ENCODE measurements at regions of chr5 and their contacts with region 1.

Region 1: DNA sequence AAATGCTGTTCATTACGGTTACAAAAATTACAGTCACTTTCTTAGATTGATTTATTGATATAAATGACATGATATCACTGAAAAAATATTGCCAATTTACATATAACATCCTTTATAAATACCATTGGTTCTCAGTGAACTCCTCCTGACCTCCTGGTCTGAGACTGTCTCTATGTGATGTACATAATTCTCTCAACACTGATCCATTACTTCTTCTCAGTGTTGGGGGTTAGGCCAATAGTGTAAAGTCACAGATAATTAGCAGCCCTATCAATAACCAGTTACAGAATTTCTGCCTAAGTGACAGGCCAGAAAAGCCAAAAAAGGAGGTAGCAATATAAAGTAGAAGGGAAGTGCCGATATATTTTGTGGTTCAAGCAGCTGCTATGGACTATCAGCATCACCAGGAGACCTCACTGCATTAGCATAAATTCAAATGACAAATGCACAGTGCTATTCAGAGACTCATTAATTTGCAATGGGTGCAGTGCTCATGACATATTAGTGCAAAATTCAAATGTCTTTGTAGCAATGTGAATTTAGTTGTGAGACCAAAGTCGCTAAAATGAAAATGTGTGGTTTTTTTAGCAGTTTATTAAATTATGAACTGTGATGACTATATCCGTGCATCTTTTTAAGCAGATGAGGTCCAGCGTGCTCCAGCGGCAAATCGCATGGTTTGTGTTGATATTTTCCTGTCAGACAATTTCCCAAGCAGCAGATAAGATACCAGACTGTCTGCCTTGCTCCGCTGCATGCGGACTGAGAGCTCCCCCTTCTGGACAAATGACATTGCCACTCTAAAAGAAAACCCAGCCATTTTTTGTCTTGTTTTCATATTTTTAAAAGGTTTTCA is 144.6 kb downstream of the CETN3 start:
- DNase-seq: peak; percentile 5 to 63
- ATAC-seq: peak; percentile 81 to 85
- H3K4me3 ChIP-seq: no peak overlapping the region
- H3K27ac ChIP-seq: no peak overlapping the region
- H3K4me1 ChIP-seq: no peaks in the 10 kb centered on the region
- CTCF ChIP-seq: peak; percentile 94
- EP300 ChIP-seq: no peak
- POLR2A ChIP-seq: no peak
- RAD21 ChIP-seq: peak; percentile 91 to 95

Region 2: GRCh38 chr5:88729084-88729828 is 1535.7 kb before region 1 on chr5:
- CTCF ChIA-PET with region 1: interaction called, 92 read pairs
- POLR2A ChIA-PET with region 1: no interaction called
- DNase-seq: peak; percentile 13 to 75
- ATAC-seq: peak; percentile 92 to 97
- H3K4me3 ChIP-seq: no peak overlapping the region
- H3K27ac ChIP-seq: no peak overlapping the region
- H3K4me1 ChIP-seq: no peaks in the 10 kb centered on the region
- CTCF ChIP-seq: peak; percentile 87
- EP300 ChIP-seq: no peak
- POLR2A ChIP-seq: no peak
- RAD21 ChIP-seq: peak; percentile 85 to 89

Region 3: DNA sequence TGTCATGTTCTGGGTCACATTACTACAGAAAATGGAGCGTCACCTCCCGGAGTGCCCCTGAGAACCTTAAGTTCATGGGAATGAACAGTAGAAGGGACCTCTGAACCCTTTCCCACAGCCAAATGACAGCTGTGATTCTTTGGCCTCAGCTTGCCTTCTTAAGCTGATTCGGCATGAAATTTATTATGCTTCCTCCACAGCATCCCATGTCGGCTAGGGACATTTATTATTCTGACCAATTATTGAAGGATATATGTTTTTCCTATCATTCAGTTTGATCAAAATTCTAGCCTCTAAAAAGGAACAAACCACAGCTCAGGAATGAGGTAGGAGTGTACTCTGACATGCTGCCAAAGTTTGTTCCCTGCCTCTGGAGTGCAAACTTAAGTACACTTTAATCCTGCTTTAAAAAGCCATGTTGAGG is 295.9 kb before region 1 on chr5:
- CTCF ChIA-PET with region 1: no interaction called
- POLR2A ChIA-PET with region 1: no interaction called
- DNase-seq: no peak
- ATAC-seq: no peak
- H3K4me3 ChIP-seq: no peak overlapping the region
- H3K27ac ChIP-seq: no peak overlapping the region
- H3K4me1 ChIP-seq: no peaks in the 10 kb centered on the region
- CTCF ChIP-seq: no peak
- EP300 ChIP-seq: no peak
- POLR2A ChIP-seq: no peak
- RAD21 ChIP-seq: no peak

Region 4: DNA sequence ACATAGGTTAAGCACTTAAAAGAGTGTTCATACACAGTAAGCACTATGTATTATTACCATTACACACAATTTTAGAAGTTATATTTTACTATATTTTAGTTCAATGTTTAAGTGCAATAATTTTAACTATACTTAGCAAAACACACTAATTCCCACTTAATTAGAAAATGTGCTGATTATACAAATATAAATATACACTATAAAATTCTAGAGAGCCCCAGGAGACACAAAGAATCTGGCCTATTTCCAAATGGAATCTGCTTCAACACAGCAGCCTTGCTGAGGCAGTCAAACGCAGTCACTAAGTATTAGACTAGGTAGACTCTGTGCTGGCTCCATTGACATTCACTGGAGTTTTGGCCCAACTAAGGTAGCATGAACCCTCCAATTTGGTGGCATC is 16.3 kb before region 1 on chr5:
- CTCF ChIA-PET with region 1: interaction called, 14 read pairs
- POLR2A ChIA-PET with region 1: no interaction called
- DNase-seq: no peak
- ATAC-seq: no peak
- H3K4me3 ChIP-seq: no peak overlapping the region
- H3K27ac ChIP-seq: no peak overlapping the region
- H3K4me1 ChIP-seq: no peaks in the 10 kb centered on the region
- CTCF ChIP-seq: no peak
- EP300 ChIP-seq: no peak
- POLR2A ChIP-seq: no peak
- RAD21 ChIP-seq: no peak

Region 5: DNA sequence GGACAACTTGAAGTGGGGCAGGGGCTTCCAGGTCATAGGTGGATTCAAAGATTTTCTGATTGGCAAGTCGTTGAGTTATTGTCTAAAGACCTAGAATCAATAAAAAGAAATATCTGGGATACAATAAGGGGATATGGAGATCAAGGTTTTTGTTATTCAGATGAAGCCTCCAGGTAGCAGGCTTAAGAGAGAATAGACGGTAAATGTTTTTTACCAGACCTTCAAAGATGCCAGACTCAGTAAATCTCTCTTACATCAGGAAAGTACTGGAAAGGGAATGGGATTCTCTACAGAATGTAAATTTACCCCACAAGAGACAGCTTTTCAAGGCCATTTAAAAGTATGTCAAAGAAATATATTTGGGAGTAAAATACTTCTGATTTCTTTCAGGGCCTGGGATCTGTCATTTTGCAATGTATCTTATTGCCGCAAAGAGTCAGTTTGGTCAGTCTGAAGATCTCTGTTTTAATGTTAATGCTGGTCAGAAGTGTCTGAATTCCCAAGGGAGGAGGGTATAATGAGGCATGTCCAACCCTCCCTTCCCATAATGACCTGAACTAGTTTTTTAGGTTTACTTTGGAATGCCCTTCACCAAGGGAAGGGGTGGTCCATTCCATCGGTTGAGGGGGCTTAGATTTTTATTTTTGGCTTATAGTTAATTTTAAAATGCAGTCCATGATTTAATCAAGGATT is 278.1 kb after region 1 on chr5:
- CTCF ChIA-PET with region 1: no interaction called
- POLR2A ChIA-PET with region 1: no interaction called
- DNase-seq: no peak
- ATAC-seq: no peak
- H3K4me3 ChIP-seq: no peak overlapping the region
- H3K27ac ChIP-seq: no peak overlapping the region
- H3K4me1 ChIP-seq: peaks cover 9% of the 10 kb centered on the region; the same call in 2 of the 3 replicates
- CTCF ChIP-seq: no peak
- EP300 ChIP-seq: no peak
- POLR2A ChIP-seq: no peak
- RAD21 ChIP-seq: no peak